PC-3 (cell line): ENCODE measurements at regions of chr4 and their contacts with region 1.

Region 1: GRCh38 chr4:186725469-186726425 is 2.1 kb upstream of the FAT1 start:
- DNase-seq: peak; percentile 72
- ATAC-seq: peak; percentile 39
- H3K4me3 ChIP-seq: peak overlapping the region; percentile 96
- H3K27ac ChIP-seq: peak overlapping the region; percentile 90
- H3K4me1 ChIP-seq: peaks cover 29% of the 10 kb centered on the region
- H3K27me3 ChIP-seq: no peaks in the 10 kb centered on the region
- CTCF ChIP-seq: peak; percentile 81

Region 2: DNA sequence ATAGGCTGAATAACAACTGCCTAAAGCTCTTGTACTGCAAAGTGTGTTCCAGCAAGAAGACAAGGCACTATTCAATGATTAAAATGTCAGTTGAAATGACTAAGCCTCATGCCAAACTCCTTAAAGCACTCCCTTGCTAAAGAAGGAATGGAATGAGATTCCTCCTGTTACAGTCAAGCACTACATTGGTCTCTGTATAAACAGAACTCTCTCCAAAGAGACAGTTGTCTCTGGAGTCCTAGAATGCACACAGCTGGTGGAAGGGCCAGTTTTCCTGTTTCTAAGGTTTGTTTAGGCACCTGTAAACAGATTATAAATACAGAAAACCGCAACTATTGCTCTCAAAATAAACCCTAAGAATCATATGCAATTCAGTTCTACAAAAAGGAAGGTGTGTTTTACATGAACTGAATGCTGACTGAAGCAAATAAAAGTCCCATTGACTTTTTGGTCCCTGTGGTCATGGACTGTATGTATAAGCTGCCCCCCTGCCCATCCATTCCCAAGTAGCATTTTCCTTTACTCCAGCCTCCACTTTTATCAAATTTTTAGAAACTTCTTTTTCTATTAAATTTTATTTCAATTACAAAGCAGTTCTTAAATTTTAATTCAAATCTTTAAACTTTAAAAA is 49.1 kb before region 1 on chr4:
- CTCF ChIA-PET with region 1: no interaction called
- POLR2A ChIA-PET with region 1: no interaction called
- intact Hi-C with region 1: loop called (anchors 2 kb)
- DNase-seq: peak; percentile 90
- ATAC-seq: peak; percentile 99
- H3K4me3 ChIP-seq: no peak overlapping the region
- H3K27ac ChIP-seq: peak overlapping the region; percentile 39
- H3K4me1 ChIP-seq: peaks cover 25% of the 10 kb centered on the region
- H3K27me3 ChIP-seq: no peaks in the 10 kb centered on the region
- CTCF ChIP-seq: no peak

Region 3: GRCh38 chr4:186789651-186790050 is 63.9 kb after region 1 on chr4:
- CTCF ChIA-PET with region 1: no interaction called
- POLR2A ChIA-PET with region 1: no interaction called
- intact Hi-C with region 1: loop called (anchors 1 kb)
- DNase-seq: no peak
- ATAC-seq: no peak
- H3K4me3 ChIP-seq: no peak overlapping the region
- H3K27ac ChIP-seq: no peak overlapping the region
- H3K4me1 ChIP-seq: peaks cover 7% of the 10 kb centered on the region
- H3K27me3 ChIP-seq: no peaks in the 10 kb centered on the region
- CTCF ChIP-seq: no peak

Region 4: DNA sequence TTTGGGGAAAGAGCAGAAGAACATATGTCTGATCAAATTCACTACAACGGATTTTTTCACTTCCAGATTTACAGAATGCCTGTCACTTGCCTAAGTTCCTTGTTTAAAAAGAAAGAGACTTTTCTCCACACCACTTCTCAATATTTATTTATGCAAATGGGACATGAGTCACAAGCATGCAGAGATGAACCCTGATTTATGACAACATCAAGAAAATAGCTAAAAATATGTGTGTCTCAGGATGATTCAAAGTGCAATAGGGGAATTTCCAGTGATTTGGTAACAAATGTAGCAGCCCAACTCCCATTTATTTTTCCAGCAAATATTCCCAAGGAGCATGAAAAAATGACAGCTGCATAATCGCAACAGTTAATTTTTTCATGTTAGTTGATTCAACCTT is 178.4 kb after region 1 on chr4:
- CTCF ChIA-PET with region 1: no interaction called
- POLR2A ChIA-PET with region 1: no interaction called
- intact Hi-C with region 1: loop called (anchors 2 kb)
- DNase-seq: peak; percentile 71
- ATAC-seq: peak; percentile 74
- H3K4me3 ChIP-seq: no peak overlapping the region
- H3K27ac ChIP-seq: peak overlapping the region; percentile 29
- H3K4me1 ChIP-seq: peaks cover 36% of the 10 kb centered on the region
- H3K27me3 ChIP-seq: no peaks in the 10 kb centered on the region
- CTCF ChIP-seq: no peak

Region 5: DNA sequence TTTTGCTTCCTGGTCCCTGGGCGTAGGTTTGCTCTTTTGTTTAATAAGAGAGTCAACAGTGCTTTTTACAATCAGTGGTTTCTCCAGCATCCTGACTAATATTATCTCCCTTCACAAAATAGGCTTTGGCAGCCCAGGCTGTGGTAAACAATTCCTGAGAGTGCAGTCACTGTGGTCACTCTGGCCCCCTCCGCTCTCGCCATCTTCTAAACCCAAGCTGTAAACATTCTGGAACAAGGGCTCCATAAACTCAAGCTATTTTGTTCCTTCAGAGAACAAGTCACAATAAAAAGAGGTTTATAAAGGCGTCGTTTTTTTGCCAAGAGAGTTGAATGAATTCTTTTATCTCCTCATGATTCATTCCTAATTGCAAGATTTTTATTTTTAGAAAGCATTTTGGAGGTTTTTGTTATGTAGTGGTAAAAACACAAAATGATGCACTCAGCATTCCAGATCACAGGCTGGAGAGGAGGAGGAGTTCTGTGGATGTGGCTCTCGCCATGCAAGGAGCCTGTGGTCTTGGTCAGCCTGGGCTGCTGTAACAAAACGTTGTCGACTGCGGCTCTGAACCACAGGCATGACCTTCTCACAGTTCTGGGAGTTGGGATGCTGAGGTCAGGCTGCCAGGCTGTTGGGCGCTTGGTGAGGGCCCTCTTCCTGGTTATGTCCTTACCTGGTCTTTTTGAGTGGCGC is 484.3 kb after region 1 on chr4:
- CTCF ChIA-PET with region 1: no interaction called
- POLR2A ChIA-PET with region 1: no interaction called
- intact Hi-C with region 1: loop called (anchors 2 kb)
- DNase-seq: peak; percentile 83
- ATAC-seq: peak; percentile 97
- H3K4me3 ChIP-seq: no peak overlapping the region
- H3K27ac ChIP-seq: peak overlapping the region; percentile 89
- H3K4me1 ChIP-seq: peaks cover 18% of the 10 kb centered on the region
- H3K27me3 ChIP-seq: no peaks in the 10 kb centered on the region
- CTCF ChIP-seq: no peak

Region 6: GRCh38 chr4:187415231-187415630 is 689.5 kb after region 1 on chr4:
- CTCF ChIA-PET with region 1: no interaction called
- POLR2A ChIA-PET with region 1: no interaction called
- intact Hi-C with region 1: loop called (anchors 10 kb)
- DNase-seq: no peak
- ATAC-seq: no peak
- H3K4me3 ChIP-seq: no peak overlapping the region
- H3K27ac ChIP-seq: no peak overlapping the region
- H3K4me1 ChIP-seq: no peaks in the 10 kb centered on the region
- H3K27me3 ChIP-seq: no peaks in the 10 kb centered on the region
- CTCF ChIP-seq: no peak